ENCODE measurements at regions of chr4 and their contacts with region 1.

Region 1: GRCh38 chr4:100657187-100657586 is 139.4 kb upstream of the EMCN start:
- DNase-seq: no peak
- ATAC-seq: no peak
- H3K4me3 ChIP-seq: no peak overlapping the region
- H3K27ac ChIP-seq: no peak overlapping the region
- H3K4me1 ChIP-seq: no peaks in the 10 kb centered on the region
- H3K27me3 ChIP-seq: no peaks in the 10 kb centered on the region
- CTCF ChIP-seq: no peak
- POLR2A ChIP-seq: no peak
- RAD21 ChIP-seq: no peak

Region 2: DNA sequence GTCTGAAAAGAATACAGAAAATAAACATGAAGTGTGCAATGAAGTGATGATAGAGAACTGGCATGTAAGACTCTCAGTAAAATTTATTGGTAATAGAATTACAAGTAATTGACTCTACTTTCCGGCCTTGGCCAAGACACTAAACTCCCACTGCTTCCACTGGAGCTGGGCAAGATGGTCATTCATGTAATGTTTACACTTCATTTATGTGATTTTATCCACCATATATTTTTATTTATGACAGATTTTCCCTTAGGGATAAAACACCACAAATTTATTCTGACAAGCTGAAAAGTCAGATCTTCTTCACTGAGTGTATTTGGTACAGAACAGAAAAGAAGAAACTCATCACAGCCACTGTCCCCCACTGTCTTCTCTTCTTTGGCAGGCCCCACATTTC is 1496.2 kb after region 1 on chr4:
- CTCF ChIA-PET with region 1: no interaction called
- POLR2A ChIA-PET with region 1: no interaction called
- dilution Hi-C with region 1: no loop called
- in situ Hi-C with region 1: no loop called
- intact Hi-C with region 1: loop called (anchors 5 kb)
- DNase-seq: no peak
- ATAC-seq: no peak
- H3K4me3 ChIP-seq: no peak overlapping the region
- H3K27ac ChIP-seq: no peak overlapping the region
- H3K4me1 ChIP-seq: no peaks in the 10 kb centered on the region
- H3K27me3 ChIP-seq: no peaks in the 10 kb centered on the region
- CTCF ChIP-seq: no peak
- POLR2A ChIP-seq: no peak
- RAD21 ChIP-seq: no peak

Measured in IMR-90 (cell line).